Activated CD4-positive, alpha-beta T cell treated with anti-CD3 and anti-CD28 coated beads for 36 hours (primary cell): ENCODE measurements at regions of chr13 and their contacts with region 1.

Region 1: DNA sequence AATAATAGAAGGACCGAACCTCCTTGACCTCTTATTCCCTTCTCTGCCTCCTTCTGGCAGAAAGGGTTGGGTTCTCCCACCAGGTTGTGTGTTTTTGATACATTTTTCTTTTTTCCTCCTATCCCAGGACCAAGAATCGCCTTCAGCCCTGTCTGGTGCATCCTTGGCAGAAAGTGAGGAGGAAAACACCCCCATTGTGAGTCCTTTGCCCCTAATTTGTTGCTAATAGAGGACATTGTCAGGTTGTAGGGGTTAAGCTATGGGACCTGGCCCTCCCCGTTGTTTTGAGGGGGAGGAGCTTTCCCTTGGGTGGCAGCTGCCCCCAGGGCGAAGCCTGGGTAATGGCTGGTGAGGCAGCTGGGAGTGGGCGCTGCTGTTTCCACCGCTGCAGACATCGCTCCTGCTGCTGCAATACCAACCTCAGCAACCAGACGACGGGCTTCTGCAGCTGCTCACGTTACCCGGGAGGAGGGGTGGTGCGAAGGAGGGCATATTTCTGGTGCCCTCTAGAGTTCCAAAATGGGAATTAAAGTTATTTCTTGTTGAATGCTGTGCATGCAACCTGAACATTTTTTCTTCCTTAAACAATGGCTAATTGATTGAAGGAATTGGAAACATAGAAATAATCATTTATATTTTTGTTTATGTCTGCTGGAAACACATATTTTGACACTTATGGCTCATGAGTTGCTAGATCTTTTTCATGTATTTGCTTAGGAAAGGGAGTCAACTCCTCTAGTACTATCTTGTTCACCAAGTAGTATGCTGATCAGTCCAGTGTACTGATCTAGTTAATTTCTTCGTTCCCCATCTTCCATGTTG is 1.5 kb downstream of the ZMYM2 start:
- DNase-seq: peak; percentile 94
- ATAC-seq: peak; percentile 64
- H3K4me3 Mint-ChIP-seq: peak overlapping the region; percentile 87
- H3K27ac Mint-ChIP-seq: peak overlapping the region; percentile 94
- H3K4me1 Mint-ChIP-seq: peaks cover 38% of the 10 kb centered on the region
- H3K27me3 Mint-ChIP-seq: no peaks in the 10 kb centered on the region

Region 2: DNA sequence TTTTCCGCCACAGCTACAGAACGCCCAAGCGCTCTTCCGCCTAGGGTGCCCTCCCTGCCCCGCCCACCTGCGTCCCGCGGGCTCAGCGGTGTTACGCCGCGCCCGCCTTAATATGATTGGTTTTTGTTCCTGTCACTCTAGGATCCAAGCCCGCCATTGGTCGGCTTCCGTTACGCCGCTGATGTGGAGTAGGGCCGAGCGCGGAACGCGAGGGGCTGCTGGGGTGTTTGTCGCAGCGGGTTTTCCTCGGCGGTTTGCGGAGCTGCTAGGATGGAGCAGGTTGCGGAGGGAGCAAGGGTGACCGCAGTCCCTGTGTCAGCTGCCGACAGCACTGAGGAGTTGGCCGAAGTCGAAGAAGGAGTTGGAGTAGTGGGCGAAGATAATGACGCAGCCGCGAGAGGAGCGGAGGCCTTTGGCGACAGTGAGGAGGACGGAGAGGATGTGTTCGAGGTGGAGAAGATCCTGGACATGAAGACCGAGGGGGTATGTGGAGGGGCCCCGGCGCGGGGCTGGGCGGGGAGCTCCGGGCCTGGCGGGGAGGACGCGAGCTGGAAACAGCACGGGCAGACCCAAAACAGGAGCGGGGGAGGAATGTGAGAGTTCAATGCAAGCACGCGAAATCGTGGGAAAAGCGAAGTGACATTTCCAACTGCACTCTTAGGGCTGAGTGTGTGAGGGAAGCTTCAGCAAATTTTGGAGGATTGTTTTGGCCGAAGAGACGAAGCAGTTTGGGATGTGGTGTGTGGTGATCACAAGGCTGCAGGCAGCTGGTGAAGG is 326.4 kb before region 1 on chr13 and contains the start of gene MPHOSPH8:
- CTCF ChIA-PET with region 1: no interaction called
- POLR2A ChIA-PET with region 1: no interaction called
- intact Hi-C with region 1: loop called (anchors 1 to 5 kb)
- DNase-seq: peak; percentile 96
- ATAC-seq: peak; percentile 98
- H3K4me3 Mint-ChIP-seq: peak within 1 kb of the TSS; percentile 99
- H3K27ac Mint-ChIP-seq: peak within 1 kb of the TSS; percentile 99
- H3K4me1 Mint-ChIP-seq: peaks cover 27% of the 10 kb centered on the region
- H3K27me3 Mint-ChIP-seq: no peaks in the 10 kb centered on the region
- total RNA-seq, gene MPHOSPH8: 39.1 to 39.8 TPM

Region 3: DNA sequence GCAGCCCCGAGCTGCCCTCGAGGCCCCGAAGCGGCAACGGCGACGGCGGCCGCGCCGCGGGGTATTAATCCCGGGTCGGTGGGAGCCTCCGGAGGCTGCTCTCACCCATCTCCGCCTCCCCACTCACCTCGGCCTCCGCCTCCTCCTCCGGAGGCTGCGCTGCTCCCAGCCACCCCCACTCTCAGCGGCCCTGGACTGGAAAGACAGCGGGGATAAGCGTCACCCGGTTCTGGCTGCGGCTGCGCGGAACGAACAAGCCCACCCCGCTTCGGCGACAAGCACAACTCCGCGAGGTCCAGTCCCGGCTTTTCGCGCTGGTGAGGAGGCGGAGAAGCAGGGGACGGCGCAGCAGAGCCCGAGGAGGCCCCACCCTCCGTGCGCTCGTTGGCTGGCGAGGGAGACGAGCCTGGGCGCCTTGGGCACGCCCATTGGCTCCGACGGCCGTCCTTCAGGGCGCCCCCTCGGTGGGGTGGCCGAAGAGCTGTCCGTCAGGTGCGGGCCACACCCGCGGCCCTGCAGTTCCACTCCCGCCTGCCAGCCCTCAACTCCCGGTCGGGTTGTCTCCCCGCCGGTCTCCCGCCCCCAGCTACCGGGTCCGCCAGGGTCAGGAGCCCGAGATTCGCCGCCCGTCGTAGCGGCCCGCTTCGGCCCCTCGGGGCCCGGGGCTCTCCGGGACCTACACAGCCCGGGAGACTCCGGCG is 96.6 kb before region 1 on chr13 and contains the start of gene ZMYM5:
- CTCF ChIA-PET with region 1: interaction called, 11 read pairs
- POLR2A ChIA-PET with region 1: interaction called, 5 read pairs
- intact Hi-C with region 1: loop called (anchors 1 kb)
- DNase-seq: peak; percentile 98
- ATAC-seq: peak; percentile 90
- H3K4me3 Mint-ChIP-seq: peak within 1 kb of the TSS; percentile 94
- H3K27ac Mint-ChIP-seq: peak within 1 kb of the TSS; percentile 97
- H3K4me1 Mint-ChIP-seq: peaks cover 41% of the 10 kb centered on the region
- H3K27me3 Mint-ChIP-seq: no peaks in the 10 kb centered on the region
- total RNA-seq, gene ZMYM5: 9.1 to 10.1 TPM

Region 4: DNA sequence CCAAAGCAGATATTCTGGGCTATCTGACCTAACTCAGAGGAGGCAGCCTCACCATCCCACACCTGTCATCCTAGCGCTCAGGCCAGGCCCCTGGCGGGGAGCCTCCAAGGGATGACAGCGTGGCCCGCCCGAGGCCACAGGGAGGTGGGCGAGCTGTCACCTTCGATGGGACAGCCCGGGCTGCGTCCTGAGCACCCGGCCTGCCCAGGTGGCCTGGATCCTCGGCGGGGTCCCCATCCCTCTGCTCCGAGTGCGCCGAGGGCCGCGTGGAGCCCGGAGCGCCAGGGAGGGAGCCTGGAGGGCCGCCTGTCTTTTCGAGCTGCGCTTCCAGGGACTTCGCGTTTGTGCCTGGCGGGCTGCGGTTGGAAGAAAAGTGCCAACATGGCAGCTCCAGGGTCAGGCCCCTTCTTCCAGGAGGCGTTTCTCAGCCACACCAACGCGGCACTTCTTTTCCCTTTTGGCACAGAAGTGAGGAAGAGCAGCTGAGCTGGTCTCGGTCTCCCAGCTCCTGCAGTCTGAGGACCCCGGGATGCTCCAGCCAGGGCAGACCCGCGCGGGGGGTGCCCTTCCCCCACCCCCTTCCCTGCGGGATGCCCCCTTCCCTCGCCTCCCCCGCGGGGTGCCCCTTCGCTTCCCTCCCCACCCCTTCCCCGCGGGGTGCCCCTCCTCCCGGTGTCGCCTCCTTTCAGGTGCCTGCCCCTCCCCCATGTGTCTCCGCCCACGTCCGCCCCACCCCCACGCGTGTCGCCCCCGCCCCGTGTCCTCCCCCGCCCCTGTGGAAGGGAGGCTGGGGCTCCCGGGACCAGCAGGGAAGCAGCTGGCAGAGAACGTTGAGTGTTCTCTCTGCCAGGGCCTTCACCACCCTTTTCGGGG is 158.5 kb after region 1 on chr13:
- CTCF ChIA-PET with region 1: interaction called, 3 read pairs
- POLR2A ChIA-PET with region 1: interaction called, 5 read pairs
- intact Hi-C with region 1: loop called in 1 of 2 experiments (anchors 1 kb)
- DNase-seq: peak; percentile 49
- ATAC-seq: peak; percentile 3
- H3K4me3 Mint-ChIP-seq: peak overlapping the region; percentile 79
- H3K27ac Mint-ChIP-seq: peak overlapping the region; percentile 80
- H3K4me1 Mint-ChIP-seq: peaks cover 18% of the 10 kb centered on the region
- H3K27me3 Mint-ChIP-seq: no peaks in the 10 kb centered on the region

Region 5: DNA sequence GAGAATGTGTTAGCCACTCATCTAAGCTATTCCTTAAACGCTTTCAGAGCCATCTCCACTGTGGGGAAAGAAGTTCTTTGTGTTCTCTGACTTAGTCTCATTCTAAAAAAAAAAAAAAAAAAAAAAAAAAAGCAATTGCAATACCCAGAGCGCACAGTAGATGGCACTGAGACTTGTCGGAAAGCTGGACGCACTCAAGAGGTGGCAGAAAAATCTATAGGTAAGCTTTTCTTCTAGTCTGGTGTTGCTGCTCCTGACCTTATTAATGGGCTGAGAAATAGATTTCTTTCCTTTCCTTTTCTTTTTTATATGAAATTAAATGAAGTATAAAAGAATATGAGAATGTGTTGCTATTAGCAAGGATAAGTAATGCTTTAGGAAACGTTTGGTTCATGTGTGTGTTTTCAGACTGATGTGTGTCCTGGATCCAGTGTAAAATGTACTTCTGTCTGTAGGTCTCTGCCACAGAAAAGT is 237.4 kb after region 1 on chr13:
- CTCF ChIA-PET with region 1: no interaction called
- POLR2A ChIA-PET with region 1: no interaction called
- intact Hi-C with region 1: no loop called
- DNase-seq: peak; percentile 41
- ATAC-seq: peak; percentile 41
- H3K4me3 Mint-ChIP-seq: no peak overlapping the region
- H3K27ac Mint-ChIP-seq: no peak overlapping the region
- H3K4me1 Mint-ChIP-seq: peaks cover 21% of the 10 kb centered on the region
- H3K27me3 Mint-ChIP-seq: peaks cover 28% of the 10 kb centered on the region

Region 6: DNA sequence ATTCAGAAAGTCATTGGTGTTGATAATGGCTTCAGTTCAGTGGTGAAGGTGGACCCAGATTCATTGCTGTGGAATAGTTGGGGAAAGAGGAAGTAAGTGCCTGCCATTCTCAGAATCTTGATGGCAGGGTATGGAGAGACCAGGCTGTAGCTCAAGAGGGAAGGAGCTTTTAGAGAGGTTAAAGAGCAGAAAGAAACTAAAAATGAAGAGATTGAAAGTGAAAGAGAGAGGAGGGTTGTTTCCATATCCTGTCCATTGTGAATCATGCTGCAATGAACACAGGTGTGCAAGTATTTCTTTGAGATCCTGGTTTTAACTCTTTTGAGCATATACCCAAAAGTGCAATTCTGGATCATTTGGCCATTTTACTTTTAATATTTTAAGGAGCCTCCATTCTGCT is 259.5 kb after region 1 on chr13:
- CTCF ChIA-PET with region 1: no interaction called
- POLR2A ChIA-PET with region 1: no interaction called
- intact Hi-C with region 1: no loop called
- DNase-seq: no peak
- ATAC-seq: peak; percentile 95
- H3K4me3 Mint-ChIP-seq: peak overlapping the region; percentile 51
- H3K27ac Mint-ChIP-seq: peak overlapping the region; percentile 77
- H3K4me1 Mint-ChIP-seq: peaks cover 20% of the 10 kb centered on the region
- H3K27me3 Mint-ChIP-seq: no peaks in the 10 kb centered on the region

Region 7: DNA sequence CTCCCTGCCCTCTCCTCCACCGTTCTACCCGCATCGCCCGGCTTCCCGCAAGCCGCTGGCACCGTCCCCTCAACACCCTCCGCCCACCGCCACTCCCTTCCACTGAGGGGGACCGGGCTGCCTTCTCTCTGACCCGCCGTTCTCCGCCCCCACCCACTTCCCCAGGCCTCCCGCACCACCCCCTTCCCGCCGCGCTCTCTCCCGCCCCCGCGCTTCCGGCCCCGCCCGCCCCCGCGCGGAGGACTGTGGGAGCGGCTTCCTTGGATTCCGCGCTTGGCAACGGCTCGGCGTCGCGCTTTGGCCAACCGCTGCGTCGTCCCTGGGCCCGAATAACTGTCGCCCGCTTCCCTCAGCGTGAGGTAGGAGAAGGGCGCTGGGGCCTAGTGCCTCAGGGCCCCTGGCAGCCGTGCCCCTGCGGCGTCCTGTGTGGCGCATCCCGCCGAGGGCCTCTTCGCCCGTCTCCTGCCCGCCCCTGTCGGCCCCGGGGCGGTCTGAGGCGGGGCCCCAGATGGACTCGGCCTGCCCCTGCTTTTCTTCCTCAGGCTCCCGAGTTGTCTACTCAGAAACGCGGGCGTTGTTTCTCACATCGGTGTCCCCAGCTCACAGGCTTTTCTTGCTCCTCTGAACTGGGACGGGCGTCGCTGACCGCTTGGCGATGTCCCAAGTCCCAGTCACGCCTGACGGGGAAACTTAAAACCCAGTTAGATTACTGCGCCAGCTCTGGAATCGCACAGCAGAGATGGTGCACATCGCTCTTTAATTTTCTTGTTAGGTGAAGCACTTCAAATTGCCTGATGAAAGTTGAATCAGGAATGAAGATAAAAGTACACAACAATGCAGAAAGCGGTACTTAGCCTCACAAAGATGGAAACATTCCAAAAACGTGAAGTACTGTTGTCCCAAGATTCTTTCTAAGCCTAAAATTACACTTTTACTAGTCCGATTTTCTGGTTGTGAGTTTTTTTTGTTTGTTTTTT is 607.1 kb after region 1 on chr13 and contains the start of gene IFT88:
- CTCF ChIA-PET with region 1: no interaction called
- POLR2A ChIA-PET with region 1: no interaction called
- intact Hi-C with region 1: loop called in 1 of 2 experiments (anchors 2 kb)
- DNase-seq: peak; percentile 89
- ATAC-seq: peak; percentile 83
- H3K4me3 Mint-ChIP-seq: peak within 1 kb of the TSS; percentile 81
- H3K27ac Mint-ChIP-seq: peak within 1 kb of the TSS; percentile 80
- H3K4me1 Mint-ChIP-seq: peaks cover 19% of the 10 kb centered on the region
- H3K27me3 Mint-ChIP-seq: no peaks in the 10 kb centered on the region
- total RNA-seq, gene IFT88: 4.7 to 4.8 TPM

Region 8: GRCh38 chr13:20902438-20903163 is 942.6 kb after region 1 on chr13 and contains the start of gene XPO4:
- CTCF ChIA-PET with region 1: no interaction called
- POLR2A ChIA-PET with region 1: no interaction called
- intact Hi-C with region 1: loop called in 1 of 2 experiments (anchors 1 kb)
- DNase-seq: peak; percentile 91
- ATAC-seq: peak; percentile 94
- H3K4me3 Mint-ChIP-seq: peak within 1 kb of the TSS; percentile 91
- H3K27ac Mint-ChIP-seq: peak within 1 kb of the TSS; percentile 92
- H3K4me1 Mint-ChIP-seq: peaks cover 32% of the 10 kb centered on the region
- H3K27me3 Mint-ChIP-seq: no peaks in the 10 kb centered on the region
- total RNA-seq, gene XPO4: 22.8 to 26.4 TPM